B cell (primary cell): ENCODE measurements at regions of chr22 and their contacts with region 1.

Region 1: DNA sequence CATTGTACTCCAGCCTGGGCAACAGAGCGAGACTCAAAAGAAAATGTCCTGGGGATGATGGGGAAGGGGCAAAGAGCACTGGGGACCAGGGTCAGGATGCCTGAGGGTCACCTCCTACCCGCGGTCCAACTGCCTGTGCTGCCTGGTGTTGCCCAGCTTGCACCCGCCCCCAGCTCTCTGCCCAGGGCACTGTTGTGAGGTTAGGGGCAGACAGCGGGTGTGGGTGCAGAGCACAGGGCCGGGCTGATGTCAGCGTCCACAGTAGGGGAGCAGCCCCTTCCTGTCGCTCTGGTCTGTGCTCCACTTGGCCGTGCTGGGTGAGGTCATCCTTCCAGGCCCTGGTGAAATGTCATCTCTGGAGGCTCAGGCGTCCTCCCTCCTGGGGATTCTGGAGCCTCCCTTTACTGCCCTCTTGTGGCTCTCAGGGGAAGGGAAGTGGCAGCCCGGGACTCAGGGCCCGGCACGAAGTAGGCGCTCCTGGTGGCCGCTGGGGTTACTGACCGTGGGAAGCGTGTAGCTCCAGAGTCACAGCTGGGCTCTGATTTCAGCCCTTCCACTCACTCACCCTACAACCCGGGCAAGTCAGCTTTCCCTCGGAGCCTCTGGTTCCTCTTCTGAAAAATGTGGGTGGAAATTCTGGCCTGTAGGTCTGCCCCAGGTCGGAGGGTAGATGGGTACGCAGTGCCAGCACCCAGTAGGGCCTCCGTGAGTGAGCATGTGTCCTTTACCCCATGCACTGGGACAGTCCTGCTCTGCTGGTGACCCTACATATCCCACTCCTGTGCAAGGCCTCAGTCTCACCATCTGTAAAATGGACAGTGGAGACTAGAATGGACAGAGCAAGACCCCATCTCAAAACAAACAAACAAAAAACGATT is 17.3 kb upstream of the PRR5 start:
- DNase-seq: peak; percentile 84
- ATAC-seq: peak; percentile 87
- H3K4me3 ChIP-seq: no peak overlapping the region
- H3K4me3 Mint-ChIP-seq: peak overlapping the region; percentile 42
- H3K27ac ChIP-seq: no peak overlapping the region
- H3K27ac Mint-ChIP-seq: peak overlapping the region; percentile 56
- H3K4me1 ChIP-seq: peaks cover 14 to 49% of the 10 kb centered on the region in 2 donors
- H3K4me1 Mint-ChIP-seq: peaks cover 30% of the 10 kb centered on the region
- H3K27me3 ChIP-seq: peaks cover 0 to 2% (median 0%) of the 10 kb centered on the region in 4 experiments
- H3K27me3 Mint-ChIP-seq: peaks cover 2% of the 10 kb centered on the region
- CTCF ChIP-seq: peak; percentile 93

Region 2: GRCh38 chr22:44444341-44445301 is 240.1 kb before region 1 on chr22:
- CTCF ChIA-PET with region 1: no interaction called
- POLR2A ChIA-PET with region 1: no interaction called
- intact Hi-C with region 1: no loop called
- DNase-seq: no peak
- ATAC-seq: no peak
- H3K4me3 ChIP-seq: no peak overlapping the region
- H3K4me3 Mint-ChIP-seq: no peak overlapping the region
- H3K27ac ChIP-seq: no peak overlapping the region
- H3K27ac Mint-ChIP-seq: no peak overlapping the region
- H3K4me1 ChIP-seq: no peaks in the 10 kb centered on the region
- H3K4me1 Mint-ChIP-seq: no peaks in the 10 kb centered on the region
- H3K27me3 ChIP-seq: no peaks in the 10 kb centered on the region
- H3K27me3 Mint-ChIP-seq: peaks cover 7% of the 10 kb centered on the region
- CTCF ChIP-seq: no peak

Region 3: DNA sequence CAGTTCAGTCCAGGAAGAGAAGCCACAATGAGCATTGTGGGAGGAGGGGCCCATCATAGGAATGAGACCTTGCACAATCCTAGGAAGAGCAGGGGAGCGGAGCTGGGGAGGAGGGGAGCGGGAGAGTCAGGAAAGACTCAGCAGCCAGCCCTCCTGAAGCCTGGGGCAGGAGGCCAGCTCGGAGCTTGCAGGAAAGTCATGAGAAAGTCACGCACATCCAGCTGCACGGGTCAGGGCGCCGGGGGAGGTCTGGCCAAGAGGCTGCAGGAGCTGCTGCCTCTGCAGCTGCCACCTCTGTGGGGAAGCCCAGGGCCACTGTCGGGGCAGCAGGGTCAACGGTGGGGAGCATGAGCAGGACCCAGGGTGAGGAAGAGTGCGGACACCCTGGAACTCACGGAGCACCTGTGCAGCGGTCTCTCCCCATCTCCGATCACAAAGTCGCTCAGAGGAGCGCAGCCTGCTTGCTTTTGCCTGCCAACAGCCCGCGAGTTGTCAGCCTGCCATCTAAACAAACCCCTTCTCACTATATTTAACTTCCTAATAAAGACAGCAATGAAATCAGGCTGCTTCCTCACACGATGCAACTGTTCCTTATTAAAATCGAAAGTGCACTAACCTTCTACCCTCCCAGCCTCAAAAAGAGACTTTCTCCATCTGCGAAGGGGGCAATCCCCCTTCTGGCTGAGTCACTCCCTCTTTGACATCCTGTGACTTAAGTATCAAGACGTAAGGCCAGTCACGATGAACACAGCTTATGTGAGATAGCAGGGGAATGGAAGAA is 133.8 kb before region 1 on chr22:
- CTCF ChIA-PET with region 1: no interaction called
- POLR2A ChIA-PET with region 1: no interaction called
- intact Hi-C with region 1: no loop called
- DNase-seq: no peak
- ATAC-seq: no peak
- H3K4me3 ChIP-seq: no peak overlapping the region
- H3K4me3 Mint-ChIP-seq: peak overlapping the region; percentile 3
- H3K27ac ChIP-seq: no peak overlapping the region
- H3K27ac Mint-ChIP-seq: no peak overlapping the region
- H3K4me1 ChIP-seq: no peaks in the 10 kb centered on the region
- H3K4me1 Mint-ChIP-seq: no peaks in the 10 kb centered on the region
- H3K27me3 ChIP-seq: peaks cover 0 to 2% (median 0%) of the 10 kb centered on the region in 4 experiments
- H3K27me3 Mint-ChIP-seq: peaks cover 11% of the 10 kb centered on the region
- CTCF ChIP-seq: no peak

Region 4: GRCh38 chr22:44664149-44664548 is 20.6 kb before region 1 on chr22:
- CTCF ChIA-PET with region 1: interaction called, 11 read pairs
- POLR2A ChIA-PET with region 1: no interaction called
- intact Hi-C with region 1: loop called (anchors 1 kb)
- DNase-seq: peak; percentile 43
- ATAC-seq: peak; percentile 31
- H3K4me3 ChIP-seq: no peak overlapping the region
- H3K4me3 Mint-ChIP-seq: no peak overlapping the region
- H3K27ac ChIP-seq: no peak overlapping the region
- H3K27ac Mint-ChIP-seq: peak overlapping the region; percentile 20
- H3K4me1 ChIP-seq: peaks cover 26 to 31% of the 10 kb centered on the region in 2 donors
- H3K4me1 Mint-ChIP-seq: peaks cover 31% of the 10 kb centered on the region
- H3K27me3 ChIP-seq: peaks cover 0 to 2% (median under 1%) of the 10 kb centered on the region in 4 experiments
- H3K27me3 Mint-ChIP-seq: no peaks in the 10 kb centered on the region
- CTCF ChIP-seq: no peak

Region 5: GRCh38 chr22:44669561-44669976 is 15.2 kb before region 1 on chr22:
- CTCF ChIA-PET with region 1: interaction called, 11 read pairs
- POLR2A ChIA-PET with region 1: no interaction called
- intact Hi-C with region 1: loop called (anchors 1 kb)
- DNase-seq: no peak
- ATAC-seq: no peak
- H3K4me3 ChIP-seq: peak overlapping the region in 1 of 5 experiments; percentile 51
- H3K4me3 Mint-ChIP-seq: peak overlapping the region; percentile 73
- H3K27ac ChIP-seq: no peak overlapping the region
- H3K27ac Mint-ChIP-seq: no peak overlapping the region
- H3K4me1 ChIP-seq: peaks cover 19 to 25% of the 10 kb centered on the region in 2 donors
- H3K4me1 Mint-ChIP-seq: peaks cover 23% of the 10 kb centered on the region
- H3K27me3 ChIP-seq: peaks cover 0 to 34% (median 10%) of the 10 kb centered on the region in 4 experiments
- H3K27me3 Mint-ChIP-seq: peaks cover 22% of the 10 kb centered on the region
- CTCF ChIP-seq: no peak

Region 6: DNA sequence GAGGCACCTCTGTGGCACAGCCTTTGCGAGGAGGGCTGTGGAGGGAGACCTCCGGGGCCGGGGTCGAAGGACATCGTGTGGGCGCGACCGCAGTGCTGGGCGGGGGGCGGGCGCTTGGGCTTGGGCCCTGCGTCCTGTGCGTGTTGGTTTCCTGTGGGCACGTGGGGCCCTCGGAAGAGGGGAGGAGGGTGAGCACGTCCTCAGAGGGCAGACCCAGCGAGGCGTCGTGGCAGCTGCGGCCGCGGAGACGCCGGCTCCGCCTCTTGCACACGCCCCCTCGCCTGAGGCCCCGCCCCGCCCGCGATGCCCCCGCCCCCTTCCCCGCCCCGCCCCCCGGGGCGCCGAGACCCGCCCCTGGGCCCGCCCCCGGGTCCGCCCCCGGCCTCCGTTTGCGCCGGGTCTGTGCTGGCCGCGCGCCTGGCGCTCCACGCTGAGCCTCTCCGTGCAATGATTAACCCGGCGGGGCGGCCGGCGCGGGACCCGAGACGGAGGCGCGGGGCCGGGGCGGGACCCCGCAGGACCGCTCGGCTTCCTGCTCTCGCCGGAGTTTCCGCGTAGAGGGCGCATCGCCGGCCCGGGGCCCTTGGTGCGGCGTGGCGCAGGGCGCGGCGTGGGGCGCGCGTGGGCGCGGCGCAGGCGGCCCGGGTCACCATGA is 17.2 kb after region 1 on chr22 and contains the start of gene PRR5:
- CTCF ChIA-PET with region 1: interaction called, 7 read pairs
- POLR2A ChIA-PET with region 1: no interaction called
- intact Hi-C with region 1: loop called (anchors 1 kb)
- DNase-seq: peak; percentile 90
- ATAC-seq: peak; percentile 92
- H3K4me3 ChIP-seq: peak within 1 kb of the TSS in 4 of 5 experiments; percentile 25 to 82 (median 60)
- H3K4me3 Mint-ChIP-seq: peak within 1 kb of the TSS; percentile 80
- H3K27ac ChIP-seq: peak within 1 kb of the TSS; percentile 61 to 66
- H3K27ac Mint-ChIP-seq: peak within 1 kb of the TSS; percentile 84
- H3K4me1 ChIP-seq: peaks cover 17 to 23% of the 10 kb centered on the region in 2 donors
- H3K4me1 Mint-ChIP-seq: peaks cover 14% of the 10 kb centered on the region
- H3K27me3 ChIP-seq: peaks cover 0 to 4% (median 0%) of the 10 kb centered on the region in 4 experiments
- H3K27me3 Mint-ChIP-seq: no peaks in the 10 kb centered on the region
- CTCF ChIP-seq: no peak
- total RNA-seq, gene PRR5: 34.3 and 36.1 TPM in 2 replicates

Region 7: DNA sequence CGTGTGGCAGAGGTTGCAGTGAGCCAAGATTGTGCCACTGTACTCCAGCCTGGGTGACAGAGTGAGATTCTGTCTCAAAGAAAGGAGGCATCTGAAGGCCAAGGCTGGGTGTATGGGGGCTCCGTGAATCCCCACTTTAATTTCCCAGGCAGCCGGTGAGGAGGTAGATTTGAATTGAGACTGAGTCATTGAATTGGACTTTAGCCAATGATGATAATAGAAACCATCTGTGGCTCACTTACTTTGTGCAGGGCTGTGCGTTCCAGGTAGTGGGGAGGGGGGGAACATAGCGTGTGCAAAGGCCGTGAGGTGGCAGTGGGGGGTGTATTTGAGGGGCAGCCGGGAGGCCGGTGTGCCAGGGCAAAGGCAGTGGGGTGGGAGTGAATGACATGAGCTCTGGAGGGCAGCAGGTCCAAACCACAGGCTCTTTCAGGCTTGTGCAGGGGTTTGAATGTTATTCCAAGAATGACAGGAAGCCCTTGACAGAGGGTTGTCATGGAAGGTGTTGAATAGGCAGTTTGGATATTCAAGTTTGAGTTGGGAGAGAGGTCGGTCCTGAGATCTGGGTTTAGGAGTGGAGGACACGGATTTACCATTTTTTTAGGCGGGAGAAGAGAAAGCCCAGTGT is 73.7 kb after region 1 on chr22:
- CTCF ChIA-PET with region 1: no interaction called
- POLR2A ChIA-PET with region 1: no interaction called
- intact Hi-C with region 1: no loop called
- DNase-seq: no peak
- ATAC-seq: no peak
- H3K4me3 ChIP-seq: no peak overlapping the region
- H3K4me3 Mint-ChIP-seq: no peak overlapping the region
- H3K27ac ChIP-seq: no peak overlapping the region
- H3K27ac Mint-ChIP-seq: no peak overlapping the region
- H3K4me1 ChIP-seq: no peaks in the 10 kb centered on the region
- H3K4me1 Mint-ChIP-seq: no peaks in the 10 kb centered on the region
- H3K27me3 ChIP-seq: peaks cover 0 to 17% (median 8%) of the 10 kb centered on the region in 4 experiments
- H3K27me3 Mint-ChIP-seq: peaks cover 36% of the 10 kb centered on the region
- CTCF ChIP-seq: no peak